GM12878 (cell line): ENCODE measurements at regions of chrX and their contacts with region 1.

Region 1: DNA sequence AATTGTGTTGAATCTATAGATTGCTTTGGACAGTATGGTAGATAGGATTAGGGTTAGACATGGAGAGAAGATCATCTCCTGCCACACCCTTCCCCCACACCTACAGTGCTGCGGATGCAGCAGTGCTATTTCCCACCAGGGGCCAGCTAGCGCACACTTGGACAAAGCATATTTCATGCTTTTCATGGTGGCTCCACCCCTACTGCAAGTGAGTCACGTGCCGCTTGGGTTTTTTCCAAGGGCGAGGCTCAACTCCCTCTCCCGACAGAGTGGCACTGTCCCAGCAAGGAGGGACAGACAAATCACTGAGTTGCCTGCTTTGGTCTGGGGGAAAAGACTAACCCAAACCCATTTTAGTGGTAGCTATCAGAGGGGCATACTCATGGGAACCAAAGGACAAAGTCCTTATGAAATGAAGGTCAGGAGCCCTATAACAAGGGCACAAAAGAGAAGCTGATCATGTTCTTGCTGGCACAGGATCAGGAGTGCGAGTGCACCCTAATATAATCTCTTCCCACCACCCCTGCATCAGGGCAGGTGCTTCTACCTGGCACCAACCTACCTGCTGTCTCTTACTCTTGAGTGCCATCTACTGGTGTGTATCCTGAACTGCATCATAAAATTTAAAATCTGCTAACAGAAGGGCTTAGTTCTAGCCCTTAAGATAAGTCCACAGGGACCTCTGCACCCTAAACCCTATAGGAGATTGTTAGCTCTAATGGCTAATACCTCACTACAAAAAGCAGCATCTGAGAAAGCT is 55.1 kb upstream of the PGAM4 start:
- DNase-seq: no peak
- ATAC-seq: peak; percentile 82
- H3K4me3 ChIP-seq: no peak overlapping the region
- H3K27ac ChIP-seq: no peak overlapping the region
- H3K4me1 ChIP-seq: no peaks in the 10 kb centered on the region
- H3K27me3 ChIP-seq: no peaks in the 10 kb centered on the region
- CTCF ChIP-seq: peak; percentile 64 to 76 (median 68)
- EP300 ChIP-seq: no peak
- POLR2A ChIP-seq: no peak
- RAD21 ChIP-seq: peak; percentile 82

Region 2: DNA sequence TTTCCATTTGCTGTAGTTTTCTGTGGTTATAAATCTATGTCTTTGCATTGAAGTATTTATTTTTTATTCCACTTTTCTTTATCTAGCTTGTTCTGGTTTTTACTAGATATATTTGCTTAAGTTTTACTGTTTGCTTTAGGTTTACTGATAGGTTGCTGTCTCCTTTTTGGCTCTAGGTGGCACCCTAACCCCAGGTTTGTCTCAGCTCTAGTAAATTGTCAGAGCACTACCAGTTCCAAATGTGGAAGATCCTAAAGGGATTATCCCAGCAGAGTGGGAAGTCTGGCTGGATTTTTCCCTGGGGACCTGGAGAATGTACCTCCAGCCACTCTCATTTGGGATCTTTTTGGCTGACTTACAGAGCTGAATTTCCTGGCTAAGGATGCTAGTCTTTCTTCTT is 1745.5 kb before region 1 on chrX:
- CTCF ChIA-PET with region 1: interaction called, 16 read pairs
- POLR2A ChIA-PET with region 1: no interaction called
- RAD21 ChIA-PET with region 1: interaction called, 8 read pairs
- SMC1A ChIA-PET with region 1: interaction called, 15 read pairs
- in situ Hi-C with region 1: no loop called
- intact Hi-C with region 1: loop called (anchors 1 kb)
- DNase-seq: peak; percentile 5
- ATAC-seq: peak; percentile 79
- H3K4me3 ChIP-seq: no peak overlapping the region
- H3K27ac ChIP-seq: no peak overlapping the region
- H3K4me1 ChIP-seq: no peaks in the 10 kb centered on the region
- H3K27me3 ChIP-seq: no peaks in the 10 kb centered on the region
- CTCF ChIP-seq: peak; percentile 61 to 79 (median 74)
- EP300 ChIP-seq: no peak
- POLR2A ChIP-seq: no peak
- RAD21 ChIP-seq: peak; percentile 94

Region 3: DNA sequence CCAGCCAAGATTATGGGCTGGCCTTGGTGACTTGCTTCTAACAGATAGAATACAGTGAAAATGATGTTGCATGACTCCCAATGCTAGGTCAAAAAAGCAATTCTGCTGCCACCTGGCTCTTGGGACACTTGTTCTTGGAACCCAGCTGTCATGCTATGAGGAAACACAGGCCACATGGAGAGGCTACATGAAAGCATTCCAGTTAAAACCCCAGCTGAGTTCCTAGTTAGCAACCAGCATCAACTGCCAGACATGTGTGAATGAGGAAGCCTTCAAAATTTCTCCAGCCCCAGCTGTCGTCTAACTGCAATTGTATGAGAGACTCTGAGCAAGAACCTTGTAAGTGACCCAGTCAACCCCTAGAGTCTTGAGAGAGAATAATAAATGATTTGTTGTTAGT is 682.5 kb before region 1 on chrX:
- CTCF ChIA-PET with region 1: no interaction called
- POLR2A ChIA-PET with region 1: no interaction called
- RAD21 ChIA-PET with region 1: no interaction called
- SMC1A ChIA-PET with region 1: no interaction called
- in situ Hi-C with region 1: no loop called
- intact Hi-C with region 1: no loop called
- DNase-seq: no peak
- ATAC-seq: no peak
- H3K4me3 ChIP-seq: no peak overlapping the region
- H3K27ac ChIP-seq: no peak overlapping the region
- H3K4me1 ChIP-seq: no peaks in the 10 kb centered on the region
- H3K27me3 ChIP-seq: no peaks in the 10 kb centered on the region
- CTCF ChIP-seq: no peak
- EP300 ChIP-seq: no peak
- POLR2A ChIP-seq: no peak
- RAD21 ChIP-seq: no peak

Region 4: DNA sequence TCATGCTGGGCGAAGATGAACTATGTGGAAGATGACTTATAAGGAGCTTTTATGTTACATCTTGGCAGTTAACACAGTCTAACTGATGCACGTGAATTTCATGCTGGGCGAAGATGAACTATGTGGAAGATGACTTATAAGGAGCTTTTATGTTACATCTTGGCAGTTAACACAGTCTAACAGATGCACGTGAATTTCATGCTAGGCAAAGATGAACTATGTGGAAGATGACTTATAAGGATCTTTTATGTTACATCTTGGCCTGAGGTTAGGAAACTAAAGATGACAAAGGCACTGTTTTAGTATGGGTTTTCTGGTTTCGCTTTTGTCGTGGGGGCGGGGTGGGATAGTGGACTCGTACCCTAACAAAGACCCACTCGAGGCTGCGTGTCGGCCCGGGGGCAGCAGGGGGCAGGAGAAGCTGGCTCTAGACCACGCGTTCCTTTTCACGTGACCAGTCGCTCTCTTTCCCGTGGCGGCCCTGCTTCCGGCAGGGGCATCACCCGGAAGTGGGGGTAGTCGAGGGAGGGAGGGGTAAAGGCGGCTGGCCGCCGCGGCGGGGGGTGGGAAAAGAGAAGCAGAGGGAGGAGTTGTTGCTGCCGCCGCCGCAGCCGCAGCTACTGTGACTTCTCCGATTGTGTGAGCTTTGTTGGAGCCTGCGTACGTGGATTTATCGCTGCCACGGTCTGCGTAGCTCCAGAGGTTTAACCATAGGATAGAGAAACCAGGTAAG is 114.3 kb before region 1 on chrX and contains the start of gene ATP7A:
- CTCF ChIA-PET with region 1: interaction called, 44 read pairs
- POLR2A ChIA-PET with region 1: interaction called, 3 read pairs
- RAD21 ChIA-PET with region 1: interaction called, 18 read pairs
- SMC1A ChIA-PET with region 1: interaction called, 17 read pairs
- in situ Hi-C with region 1: loop called (anchors 10 kb)
- intact Hi-C with region 1: loop called (anchors 1 kb)
- DNase-seq: peak; percentile 69
- ATAC-seq: peak; percentile 93
- H3K4me3 ChIP-seq: peak within 1 kb of the TSS; percentile 71
- H3K27ac ChIP-seq: peak within 1 kb of the TSS; percentile 62
- H3K4me1 ChIP-seq: no peaks in the 10 kb centered on the region
- H3K27me3 ChIP-seq: no peaks in the 10 kb centered on the region
- CTCF ChIP-seq: peak; percentile 53 to 68 (median 65)
- EP300 ChIP-seq: no peak
- POLR2A ChIP-seq: peak; percentile 74
- RAD21 ChIP-seq: peak; percentile 68
- polyA plus RNA-seq, gene ATP7A: 2.5 to 3.7 TPM

Region 5: DNA sequence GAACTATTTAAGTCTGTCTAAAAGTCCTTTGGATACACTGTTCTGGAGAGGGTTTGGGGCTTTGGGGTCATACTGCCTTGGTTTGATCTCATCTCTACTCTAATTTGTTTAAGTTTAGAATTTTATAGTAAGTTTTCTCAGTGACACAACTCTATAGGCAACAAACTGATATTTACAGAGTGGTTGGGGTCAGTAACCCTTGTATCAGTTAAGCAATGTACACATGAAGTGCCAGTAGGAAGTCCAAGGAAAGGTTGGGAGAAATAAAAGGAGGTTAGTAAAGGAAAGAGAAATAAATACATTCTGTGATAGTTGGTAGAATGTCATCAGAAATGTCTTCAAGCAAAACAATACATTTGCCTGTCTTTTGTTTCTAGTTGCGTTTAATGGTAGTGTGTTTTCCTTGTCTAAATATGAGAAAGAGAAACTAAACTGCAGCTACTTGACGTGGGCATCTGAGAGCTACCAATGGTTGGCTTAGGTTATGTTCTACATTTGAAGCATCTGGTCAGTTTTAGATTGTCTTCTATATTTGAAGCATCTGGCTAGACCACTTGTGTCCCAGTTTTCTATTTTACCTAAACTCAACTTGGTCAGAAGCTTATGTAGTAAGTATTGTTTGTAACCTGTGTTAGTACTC is 107.1 kb before region 1 on chrX:
- CTCF ChIA-PET with region 1: interaction called, 44 read pairs
- POLR2A ChIA-PET with region 1: no interaction called
- RAD21 ChIA-PET with region 1: interaction called, 15 read pairs
- SMC1A ChIA-PET with region 1: interaction called, 17 read pairs
- in situ Hi-C with region 1: no loop called
- intact Hi-C with region 1: no loop called
- DNase-seq: no peak
- ATAC-seq: peak; percentile 76
- H3K4me3 ChIP-seq: peak overlapping the region; percentile 48
- H3K27ac ChIP-seq: peak overlapping the region; percentile 64
- H3K4me1 ChIP-seq: no peaks in the 10 kb centered on the region
- H3K27me3 ChIP-seq: no peaks in the 10 kb centered on the region
- CTCF ChIP-seq: no peak
- EP300 ChIP-seq: no peak
- POLR2A ChIP-seq: no peak
- RAD21 ChIP-seq: no peak

Region 6: DNA sequence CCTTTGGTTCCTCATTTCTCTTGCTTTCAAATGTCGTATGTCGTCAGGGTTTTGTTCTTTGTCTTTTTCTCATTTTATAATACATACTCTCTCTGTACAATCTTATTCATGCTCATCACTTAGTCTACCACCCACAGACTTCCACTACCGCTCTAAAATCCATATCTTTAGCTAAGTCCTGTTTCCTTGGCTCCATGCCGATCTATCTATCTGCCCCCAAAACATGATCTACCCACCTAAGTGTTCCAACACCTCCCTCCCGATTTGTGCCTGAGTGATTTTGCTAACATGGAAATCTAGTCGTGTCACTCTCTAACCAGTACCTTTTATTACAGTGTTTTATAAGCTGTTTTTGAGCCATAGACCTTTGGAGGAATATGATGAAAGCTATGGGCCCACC is 10.5 kb after region 1 on chrX:
- CTCF ChIA-PET with region 1: interaction called, 10 read pairs
- POLR2A ChIA-PET with region 1: interaction called, 3 read pairs
- RAD21 ChIA-PET with region 1: no interaction called
- SMC1A ChIA-PET with region 1: interaction called, 7 read pairs
- in situ Hi-C with region 1: no loop called
- intact Hi-C with region 1: no loop called
- DNase-seq: no peak
- ATAC-seq: no peak
- H3K4me3 ChIP-seq: no peak overlapping the region
- H3K27ac ChIP-seq: no peak overlapping the region
- H3K4me1 ChIP-seq: no peaks in the 10 kb centered on the region
- H3K27me3 ChIP-seq: no peaks in the 10 kb centered on the region
- CTCF ChIP-seq: no peak
- EP300 ChIP-seq: no peak
- POLR2A ChIP-seq: no peak
- RAD21 ChIP-seq: no peak

Region 7: GRCh38 chrX:78092296-78092695 is 67.8 kb after region 1 on chrX:
- CTCF ChIA-PET with region 1: interaction called, 27 read pairs
- POLR2A ChIA-PET with region 1: no interaction called
- RAD21 ChIA-PET with region 1: interaction called, 10 read pairs
- SMC1A ChIA-PET with region 1: interaction called, 8 read pairs
- in situ Hi-C with region 1: no loop called
- intact Hi-C with region 1: no loop called
- DNase-seq: peak; percentile 37
- ATAC-seq: peak; percentile 98
- H3K4me3 ChIP-seq: no peak overlapping the region
- H3K27ac ChIP-seq: no peak overlapping the region
- H3K4me1 ChIP-seq: no peaks in the 10 kb centered on the region
- H3K27me3 ChIP-seq: no peaks in the 10 kb centered on the region
- CTCF ChIP-seq: peak; percentile 45; a peak in 5 of 6 replicates
- EP300 ChIP-seq: no peak
- POLR2A ChIP-seq: no peak
- RAD21 ChIP-seq: peak; percentile 73